ENCODE measurements at regions of chr3 and their contacts with region 1.

Region 1: GRCh38 chr3:85801955-85802354 is 843.2 kb downstream of the CADM2 start:
- DNase-seq: peak; percentile 20
- ATAC-seq: peak; percentile 78; the same call in 2 of the 3 replicates
- H3K4me3 ChIP-seq: no peak overlapping the region
- H3K27ac ChIP-seq: no peak overlapping the region
- H3K4me1 ChIP-seq: no peaks in the 10 kb centered on the region
- H3K27me3 ChIP-seq: no peaks in the 10 kb centered on the region
- CTCF ChIP-seq: peak; percentile 26; the same call in 1 of the 2 replicates
- EP300 ChIP-seq: no peak
- POLR2A ChIP-seq: no peak
- RAD21 ChIP-seq: no peak

Region 2: DNA sequence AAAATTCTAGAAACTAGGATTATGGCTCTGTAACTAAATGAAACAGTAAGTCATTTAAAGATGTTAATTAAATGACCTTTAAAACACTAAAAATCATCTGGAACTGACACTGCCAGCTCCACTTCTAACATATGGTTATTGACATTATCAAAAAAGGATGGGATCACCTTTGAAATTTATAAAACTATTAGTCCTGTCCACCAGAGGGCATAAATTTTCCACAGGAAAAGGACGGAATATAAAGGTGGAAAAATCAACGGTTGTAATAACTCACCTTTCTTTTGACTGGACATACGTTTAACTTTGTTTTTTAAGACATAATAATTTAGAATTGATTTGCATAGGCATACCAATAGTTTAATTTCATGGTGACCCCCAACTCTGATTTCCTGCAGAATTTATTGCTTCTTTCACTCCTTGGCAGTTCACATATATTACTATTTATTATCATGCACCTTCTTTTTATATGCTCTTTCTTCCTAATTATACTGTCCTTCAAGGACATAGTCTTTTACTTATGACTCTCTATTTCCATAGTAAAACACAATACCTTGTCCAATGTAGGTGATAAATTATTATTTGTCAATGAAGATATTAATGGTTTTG is 497.5 kb before region 1 on chr3:
- CTCF ChIA-PET with region 1: no interaction called
- POLR2A ChIA-PET with region 1: no interaction called
- in situ Hi-C with region 1: no loop called
- intact Hi-C with region 1: loop called (anchors 5 kb)
- DNase-seq: peak; percentile 3
- ATAC-seq: peak; percentile 32; the same call in 1 of the 3 replicates
- H3K4me3 ChIP-seq: no peak overlapping the region
- H3K27ac ChIP-seq: no peak overlapping the region
- H3K4me1 ChIP-seq: no peaks in the 10 kb centered on the region
- H3K27me3 ChIP-seq: no peaks in the 10 kb centered on the region; a peak in 1 of 5 replicates
- CTCF ChIP-seq: peak; percentile 32
- EP300 ChIP-seq: no peak
- POLR2A ChIP-seq: no peak
- RAD21 ChIP-seq: no peak

Region 3: DNA sequence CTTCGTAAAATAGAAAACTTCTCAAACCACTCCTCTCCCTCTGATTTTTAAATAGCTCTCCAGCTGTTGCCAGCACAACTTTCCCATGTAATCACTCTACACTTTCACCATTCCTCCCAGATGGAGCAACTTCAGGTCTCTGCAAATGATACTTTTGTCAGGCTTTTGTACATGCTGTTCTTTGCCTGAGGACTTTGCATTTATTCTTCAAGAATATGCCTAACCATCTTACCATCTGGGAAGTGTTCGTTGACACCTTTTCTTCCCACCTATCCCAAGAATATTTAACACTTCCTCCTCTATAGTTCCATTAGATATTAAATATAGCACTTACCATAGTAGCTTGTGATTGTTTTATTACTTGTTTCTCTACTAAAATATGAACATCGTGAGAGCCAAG is 139.5 kb before region 1 on chr3:
- CTCF ChIA-PET with region 1: no interaction called
- POLR2A ChIA-PET with region 1: no interaction called
- in situ Hi-C with region 1: no loop called
- intact Hi-C with region 1: loop called (anchors 10 kb)
- DNase-seq: no peak
- ATAC-seq: no peak
- H3K4me3 ChIP-seq: no peak overlapping the region
- H3K27ac ChIP-seq: no peak overlapping the region
- H3K4me1 ChIP-seq: no peaks in the 10 kb centered on the region
- H3K27me3 ChIP-seq: no peaks in the 10 kb centered on the region
- CTCF ChIP-seq: no peak
- EP300 ChIP-seq: no peak
- POLR2A ChIP-seq: no peak
- RAD21 ChIP-seq: no peak